A549 (cell line): ENCODE measurements at regions of chr10 and their contacts with region 1.

Region 1: GRCh38 chr10:100743626-100744135 is 1.7 kb upstream of the PAX2 start:
- DNase-seq: peak; percentile 84 to 85
- ATAC-seq: peak; percentile 54 to 75
- H3K4me3 ChIP-seq: peak overlapping the region; percentile 50
- H3K27ac ChIP-seq: peak overlapping the region in 1 of 2 experiments; percentile 8; a peak in 1 of 6 replicates
- H3K4me1 ChIP-seq: peaks cover 29% of the 10 kb centered on the region
- CTCF ChIP-seq: peak; percentile 88
- EP300 ChIP-seq: no peak
- POLR2A ChIP-seq: no peak
- RAD21 ChIP-seq: peak; percentile 90 to 93

Region 2: DNA sequence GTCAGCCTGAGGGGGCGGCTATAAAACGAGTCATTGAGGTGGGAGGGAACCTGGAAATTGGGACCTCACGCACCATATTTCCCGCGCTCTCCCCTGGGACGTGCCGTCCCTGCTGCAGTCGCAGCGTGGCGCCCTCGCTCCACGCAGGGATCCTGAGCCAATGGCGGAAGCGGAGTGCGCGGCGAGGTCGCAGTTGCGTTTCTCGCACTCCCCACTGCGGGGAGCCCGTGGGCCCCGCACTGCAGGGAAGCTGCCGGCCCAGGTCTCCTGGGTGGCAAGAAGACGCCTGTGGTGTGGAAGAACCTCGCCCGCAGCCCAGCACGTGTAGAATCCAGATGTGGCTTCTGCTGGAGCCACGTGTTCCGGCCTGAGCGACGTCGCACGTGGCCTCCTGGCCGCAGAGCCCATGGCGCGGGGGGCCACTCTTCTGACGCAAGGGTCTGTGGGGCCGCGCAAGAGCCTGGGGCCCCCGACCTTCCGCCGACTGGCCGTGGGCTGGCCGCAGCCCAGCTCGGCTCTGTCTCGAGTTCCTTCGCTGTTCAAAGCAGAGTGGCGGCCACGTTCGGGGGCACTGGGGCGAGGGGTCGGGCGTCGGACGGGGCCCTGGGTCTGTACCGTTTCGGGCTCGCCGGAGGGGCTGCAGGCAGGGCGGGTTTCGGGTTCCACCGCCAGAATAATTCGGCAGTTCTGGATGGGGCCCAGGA is 181.5 kb before region 1 on chr10:
- CTCF ChIA-PET with region 1: interaction called, 127 read pairs
- POLR2A ChIA-PET with region 1: interaction called, 5 read pairs
- DNase-seq: peak; percentile 84 to 86
- ATAC-seq: peak; percentile 78 to 90
- H3K4me3 ChIP-seq: no peak overlapping the region
- H3K27ac ChIP-seq: peak overlapping the region in 1 of 2 experiments; percentile 63; a peak in 3 of 6 replicates
- H3K4me1 ChIP-seq: peaks cover 7% of the 10 kb centered on the region; the same call in 2 of the 3 replicates
- CTCF ChIP-seq: peak; percentile 98
- EP300 ChIP-seq: no peak
- POLR2A ChIP-seq: 0 out of 2 replicates have a peak, but pooled peaks have one; percentile 10
- RAD21 ChIP-seq: peak; percentile 97 to 98

Region 3: GRCh38 chr10:100637785-100638184 is 105.9 kb before region 1 on chr10:
- CTCF ChIA-PET with region 1: interaction called, 30 read pairs
- POLR2A ChIA-PET with region 1: no interaction called
- DNase-seq: peak; percentile 62 to 67
- ATAC-seq: peak; percentile 85 to 98
- H3K4me3 ChIP-seq: no peak overlapping the region
- H3K27ac ChIP-seq: no peak overlapping the region
- H3K4me1 ChIP-seq: no peaks in the 10 kb centered on the region
- CTCF ChIP-seq: peak; percentile 41
- EP300 ChIP-seq: no peak
- POLR2A ChIP-seq: no peak
- RAD21 ChIP-seq: peak in 1 of 2 experiments; percentile 41; a peak in 2 of 5 replicates

Region 4: GRCh38 chr10:100677290-100677945 is 66.3 kb before region 1 on chr10:
- CTCF ChIA-PET with region 1: interaction called, 66 read pairs
- POLR2A ChIA-PET with region 1: no interaction called
- DNase-seq: no peak
- ATAC-seq: no peak
- H3K4me3 ChIP-seq: no peak overlapping the region
- H3K27ac ChIP-seq: no peak overlapping the region
- H3K4me1 ChIP-seq: peaks cover 4% of the 10 kb centered on the region; the same call in 1 of the 3 replicates
- CTCF ChIP-seq: no peak
- EP300 ChIP-seq: no peak
- POLR2A ChIP-seq: no peak
- RAD21 ChIP-seq: no peak

Region 5: DNA sequence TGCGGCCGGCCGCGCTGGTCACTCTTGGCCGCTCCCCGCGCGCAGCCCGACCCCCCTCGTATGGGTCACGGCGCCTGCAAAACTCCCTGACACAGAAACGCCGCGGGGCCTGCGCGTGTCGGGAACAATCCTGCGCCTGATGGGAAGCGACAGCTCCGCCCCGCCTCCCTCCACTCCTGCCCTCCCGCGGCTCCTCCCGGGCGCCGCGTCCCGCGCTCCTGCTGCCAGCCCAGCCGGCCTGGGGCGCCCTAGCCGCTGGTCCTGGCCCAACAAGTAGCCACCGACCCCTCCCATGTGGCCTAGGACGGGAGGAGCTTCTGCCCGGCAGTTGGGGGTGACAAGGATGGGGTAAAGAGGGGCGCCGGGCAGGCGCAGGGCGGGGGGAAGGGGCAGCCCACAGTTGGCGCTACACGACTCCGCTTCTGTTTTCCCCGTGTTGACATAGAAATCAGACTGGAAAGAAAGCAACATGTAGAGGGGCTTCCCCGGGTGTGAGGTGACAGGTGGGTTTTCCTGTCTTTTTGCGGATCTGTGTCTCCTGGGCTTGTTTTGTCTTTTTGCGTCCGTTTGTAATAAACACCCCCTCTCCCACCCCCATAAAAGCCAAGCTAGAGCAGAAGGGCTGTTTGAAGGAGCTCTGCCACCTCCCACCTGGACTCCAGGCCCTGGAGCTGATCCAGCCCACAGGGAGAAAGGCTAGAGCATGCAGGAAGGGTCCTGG is 33.4 kb before region 1 on chr10:
- CTCF ChIA-PET with region 1: interaction called, 31 read pairs
- POLR2A ChIA-PET with region 1: interaction called, 3 read pairs
- DNase-seq: peak in 1 of 2 experiments; percentile 41
- ATAC-seq: peak; percentile 65 to 80; a peak in 4 of 6 replicates
- H3K4me3 ChIP-seq: peak overlapping the region; percentile 47
- H3K27ac ChIP-seq: peak overlapping the region; percentile 39 to 79; a peak in 5 of 6 replicates
- H3K4me1 ChIP-seq: 0 out of 3 replicates have a peak, but pooled peaks cover 4% of the 10 kb centered on the region
- CTCF ChIP-seq: no peak
- EP300 ChIP-seq: no peak
- POLR2A ChIP-seq: no peak
- RAD21 ChIP-seq: no peak

Region 6: DNA sequence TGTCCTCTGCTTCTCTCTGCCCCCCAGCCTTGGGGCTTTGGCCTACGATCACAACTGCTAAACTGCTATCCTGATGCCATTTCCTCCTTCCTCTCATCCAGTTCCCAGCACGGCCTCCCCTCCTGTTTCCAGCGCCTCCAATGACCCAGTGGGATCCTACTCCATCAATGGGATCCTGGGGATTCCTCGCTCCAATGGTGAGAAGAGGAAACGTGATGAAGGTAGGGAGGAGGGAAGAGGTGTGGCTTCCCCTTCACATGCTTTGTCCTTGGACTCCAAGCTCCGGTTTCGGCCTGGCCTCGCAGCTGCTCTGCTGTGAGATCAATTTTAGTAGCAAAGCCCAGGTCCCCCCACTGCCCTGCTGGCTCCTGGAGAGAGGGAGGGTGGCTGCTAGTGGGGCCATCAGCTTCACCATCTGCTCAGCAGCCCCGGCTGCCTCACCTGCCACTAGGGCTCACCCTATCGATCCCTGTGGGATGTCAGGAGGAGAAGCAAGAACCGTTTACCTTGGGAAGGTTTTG is 37.5 kb after region 1 on chr10:
- CTCF ChIA-PET with region 1: interaction called, 12 read pairs
- POLR2A ChIA-PET with region 1: no interaction called
- DNase-seq: no peak
- ATAC-seq: no peak
- H3K4me3 ChIP-seq: no peak overlapping the region
- H3K27ac ChIP-seq: no peak overlapping the region
- H3K4me1 ChIP-seq: no peaks in the 10 kb centered on the region
- CTCF ChIP-seq: no peak
- EP300 ChIP-seq: no peak
- POLR2A ChIP-seq: no peak
- RAD21 ChIP-seq: no peak

Region 7: DNA sequence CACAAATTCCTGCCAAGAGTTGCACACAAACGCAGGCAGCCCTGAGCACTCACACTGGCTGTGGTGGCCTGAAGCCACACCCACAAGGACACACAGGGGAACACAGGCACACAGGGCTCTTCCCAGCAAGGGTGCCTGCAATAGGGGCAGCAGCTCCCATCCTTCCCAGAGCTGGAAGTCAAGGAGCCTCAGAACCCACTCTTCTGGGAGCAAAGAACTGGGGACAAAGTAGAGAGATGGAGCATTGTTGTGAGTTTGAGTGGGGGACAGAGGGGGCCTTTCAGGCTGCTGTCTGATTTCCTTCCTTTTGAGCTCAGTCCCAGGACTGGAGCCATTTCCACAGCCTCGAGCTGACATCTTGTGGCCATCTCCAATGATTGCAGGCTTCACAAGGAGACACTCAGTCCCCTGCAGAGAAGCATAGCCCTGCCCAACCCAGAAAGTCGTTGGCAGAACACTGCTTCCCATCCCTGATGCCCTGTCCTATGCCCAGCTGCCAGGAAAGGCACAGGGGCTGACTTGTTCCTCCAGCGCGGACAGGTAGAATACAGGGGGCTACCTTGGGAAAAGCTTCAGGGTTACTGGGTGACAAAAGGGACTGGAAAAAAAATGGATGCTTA is 134.7 kb after region 1 on chr10:
- CTCF ChIA-PET with region 1: interaction called, 51 read pairs
- POLR2A ChIA-PET with region 1: no interaction called
- DNase-seq: peak; percentile 80 to 92
- ATAC-seq: peak; percentile 90 to 97
- H3K4me3 ChIP-seq: no peak overlapping the region
- H3K27ac ChIP-seq: peak overlapping the region in 1 of 2 experiments; percentile 64; a peak in 2 of 6 replicates
- H3K4me1 ChIP-seq: peaks cover 15% of the 10 kb centered on the region; the same call in 2 of the 3 replicates
- CTCF ChIP-seq: peak; percentile 91
- EP300 ChIP-seq: no peak
- POLR2A ChIP-seq: no peak
- RAD21 ChIP-seq: peak; percentile 91 to 94

Region 8: DNA sequence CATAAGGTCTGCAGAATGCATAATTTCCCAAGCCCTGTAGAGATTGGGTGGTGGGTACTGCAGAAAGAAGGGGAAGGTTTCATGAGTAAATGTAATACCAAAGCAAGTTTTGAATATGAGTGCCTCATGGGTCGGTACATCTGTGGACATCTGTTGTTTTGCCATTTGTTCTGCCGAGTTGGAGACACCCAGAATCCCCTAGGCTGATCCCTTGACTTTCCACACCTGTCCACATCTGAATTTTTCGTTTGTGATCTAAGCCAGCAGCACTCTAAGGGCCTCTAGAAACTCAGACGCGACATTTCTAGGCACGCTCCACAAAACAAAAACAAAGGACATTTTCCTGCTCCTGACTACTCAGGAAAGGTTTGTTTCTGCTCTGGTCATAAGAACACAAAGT is 157.4 kb after region 1 on chr10:
- CTCF ChIA-PET with region 1: no interaction called
- POLR2A ChIA-PET with region 1: no interaction called
- DNase-seq: no peak
- ATAC-seq: no peak
- H3K4me3 ChIP-seq: no peak overlapping the region
- H3K27ac ChIP-seq: no peak overlapping the region
- H3K4me1 ChIP-seq: peaks cover 14% of the 10 kb centered on the region
- CTCF ChIP-seq: no peak
- EP300 ChIP-seq: no peak
- POLR2A ChIP-seq: no peak
- RAD21 ChIP-seq: no peak

Region 9: GRCh38 chr10:101319241-101319915 is 575.7 kb after region 1 on chr10:
- CTCF ChIA-PET with region 1: no interaction called
- POLR2A ChIA-PET with region 1: no interaction called
- DNase-seq: no peak
- ATAC-seq: no peak
- H3K4me3 ChIP-seq: no peak overlapping the region
- H3K27ac ChIP-seq: no peak overlapping the region
- H3K4me1 ChIP-seq: no peaks in the 10 kb centered on the region
- CTCF ChIP-seq: no peak
- EP300 ChIP-seq: no peak
- POLR2A ChIP-seq: no peak
- RAD21 ChIP-seq: no peak